ENCODE measurements at regions of chr6 and their contacts with region 1.

Region 1: DNA sequence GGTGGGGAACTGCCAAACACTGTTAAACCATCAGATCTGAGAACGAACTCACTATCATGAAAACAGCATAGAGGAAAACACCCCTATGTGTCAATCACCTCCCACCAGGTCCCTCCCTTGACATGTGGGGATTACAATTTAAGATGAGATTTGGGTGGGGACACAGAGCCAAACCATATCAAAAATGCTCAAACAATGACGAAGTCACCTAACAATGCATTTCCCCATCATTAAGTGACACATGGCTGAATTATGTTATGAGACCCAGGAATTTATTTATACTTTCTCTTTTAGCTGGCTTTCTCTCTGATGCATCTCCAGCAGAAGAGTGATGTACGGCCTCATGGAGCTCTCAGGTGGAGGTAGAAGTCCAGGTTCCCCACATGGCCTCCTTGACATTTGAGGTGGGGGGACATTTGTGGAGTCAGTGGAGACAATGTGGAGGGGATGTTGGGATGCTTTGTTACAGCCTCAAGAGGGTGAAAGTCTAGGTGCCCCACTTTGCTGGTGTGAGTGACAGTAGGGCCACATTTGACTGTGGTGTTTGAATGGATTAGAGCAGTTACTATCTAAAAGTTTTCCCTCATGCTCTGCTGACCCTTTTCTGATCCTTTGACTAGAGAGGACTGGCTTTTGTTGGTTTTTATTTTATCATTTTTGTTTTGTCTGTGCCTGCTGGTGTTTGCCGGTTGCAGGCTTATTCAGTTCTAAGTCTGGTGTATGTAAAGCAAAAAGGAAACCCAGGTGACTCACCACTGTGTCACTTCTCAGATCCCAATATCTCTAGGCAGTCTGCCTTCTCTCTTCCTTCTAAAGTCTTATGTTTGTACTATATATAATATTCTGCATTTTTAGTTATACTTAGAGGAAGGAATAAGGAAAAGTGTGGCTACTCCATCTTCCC is 18.5 kb upstream of the DCBLD1 start:
- DNase-seq: peak; percentile 52
- H3K4me3 Mint-ChIP-seq: peak overlapping the region; percentile 6
- H3K27ac Mint-ChIP-seq: peak overlapping the region; percentile 78
- H3K4me1 Mint-ChIP-seq: peaks cover 21% of the 10 kb centered on the region
- H3K27me3 Mint-ChIP-seq: peaks cover 30% of the 10 kb centered on the region

Region 2: DNA sequence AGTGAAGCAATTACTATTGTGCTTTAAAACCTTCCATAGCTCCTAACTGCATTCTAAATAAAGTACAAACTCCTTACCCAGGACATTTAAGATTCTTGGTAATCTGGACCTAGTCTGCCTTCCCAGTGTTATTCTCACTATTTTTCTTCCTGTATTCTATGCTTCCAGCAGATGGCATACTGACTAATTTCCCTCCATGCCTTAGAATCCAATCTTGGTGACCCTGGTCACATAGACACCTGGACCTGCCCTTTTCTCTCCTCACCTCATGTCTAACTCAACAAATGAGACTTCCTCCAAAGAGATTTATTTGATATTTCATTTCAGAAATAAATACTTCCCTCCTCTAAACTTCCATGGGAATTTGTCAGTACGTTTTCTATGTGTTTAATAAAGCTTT is 64.1 kb before region 1 on chr6:
- intact Hi-C with region 1: no loop called
- DNase-seq: no peak
- H3K4me3 Mint-ChIP-seq: no peak overlapping the region
- H3K27ac Mint-ChIP-seq: no peak overlapping the region
- H3K4me1 Mint-ChIP-seq: no peaks in the 10 kb centered on the region
- H3K27me3 Mint-ChIP-seq: peaks cover 2% of the 10 kb centered on the region

Region 3: GRCh38 chr6:117482240-117483003 is 18.4 kb after region 1 on chr6 and contains the start of gene DCBLD1:
- intact Hi-C with region 1: loop called (anchors 2 kb)
- DNase-seq: peak; percentile 90
- H3K4me3 Mint-ChIP-seq: peak within 1 kb of the TSS; percentile 95
- H3K27ac Mint-ChIP-seq: peak within 1 kb of the TSS; percentile 86
- H3K4me1 Mint-ChIP-seq: peaks cover 16% of the 10 kb centered on the region
- H3K27me3 Mint-ChIP-seq: peaks cover 61% of the 10 kb centered on the region
- total RNA-seq, gene DCBLD1: 3.7 and 4.8 TPM in 2 replicates

Measured in activated CD4-positive, alpha-beta T cell treated with anti-CD3 and anti-CD28 coated beads, Interleukin-2, amount 10 ng/mL, durations not matched to agents 24 days and 14 days (primary cell).